ENCODE measurements at regions of chr6 and their contacts with region 1.

Region 1: DNA sequence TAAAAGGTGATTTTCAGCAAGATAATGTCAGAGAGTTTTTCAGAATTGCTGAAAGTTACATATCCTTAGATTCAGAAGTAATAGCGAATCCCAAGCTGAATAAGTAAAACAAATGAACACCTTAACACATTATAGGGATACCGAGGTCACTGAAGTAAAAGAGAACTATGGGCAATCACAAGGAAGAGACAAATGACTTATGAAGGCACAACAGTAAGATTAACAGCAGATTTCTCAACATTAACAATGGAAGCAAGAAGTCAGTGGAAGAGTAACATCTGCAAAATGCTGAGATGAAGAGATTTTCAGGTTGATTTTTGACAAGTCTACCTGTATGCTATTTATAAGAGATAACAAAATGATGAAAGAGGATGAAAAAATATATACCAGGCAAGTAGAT is 86.1 kb upstream of the EZR start:
- DNase-seq: no peak
- ATAC-seq: no peak
- H3K4me3 ChIP-seq: no peak overlapping the region
- H3K4me3 Mint-ChIP-seq: no peak overlapping the region
- H3K27ac ChIP-seq: no peak overlapping the region
- H3K27ac Mint-ChIP-seq: no peak overlapping the region
- H3K4me1 ChIP-seq: peaks cover 7% of the 10 kb centered on the region
- H3K4me1 Mint-ChIP-seq: peaks cover 6 to 7% of the 10 kb centered on the region in 2 donors
- H3K27me3 ChIP-seq: no peaks in the 10 kb centered on the region
- H3K27me3 Mint-ChIP-seq: peaks cover 0 to 3% of the 10 kb centered on the region in 2 donors
- CTCF ChIP-seq: no peak

Region 2: GRCh38 chr6:158803733-158804143 is 101.5 kb before region 1 on chr6:
- intact Hi-C with region 1: loop called (anchors 2 kb)
- DNase-seq: peak; percentile 44 to 76
- ATAC-seq: peak; percentile 65 to 80 (median 76)
- H3K4me3 ChIP-seq: peak overlapping the region; percentile 25
- H3K4me3 Mint-ChIP-seq: peak overlapping the region; percentile 72
- H3K27ac ChIP-seq: peak overlapping the region; percentile 74
- H3K27ac Mint-ChIP-seq: peak overlapping the region; percentile 88 to 91
- H3K4me1 ChIP-seq: peaks cover 56% of the 10 kb centered on the region
- H3K4me1 Mint-ChIP-seq: peaks cover 76% of the 10 kb centered on the region in 2 donors
- H3K27me3 ChIP-seq: no peaks in the 10 kb centered on the region
- H3K27me3 Mint-ChIP-seq: no peaks in the 10 kb centered on the region
- CTCF ChIP-seq: no peak

Region 3: GRCh38 chr6:158894193-158894592 is 11.1 kb before region 1 on chr6:
- intact Hi-C with region 1: no loop called
- DNase-seq: no peak
- ATAC-seq: no peak
- H3K4me3 ChIP-seq: no peak overlapping the region
- H3K4me3 Mint-ChIP-seq: no peak overlapping the region
- H3K27ac ChIP-seq: no peak overlapping the region
- H3K27ac Mint-ChIP-seq: no peak overlapping the region
- H3K4me1 ChIP-seq: peaks cover 2% of the 10 kb centered on the region
- H3K4me1 Mint-ChIP-seq: no peaks in the 10 kb centered on the region
- H3K27me3 ChIP-seq: no peaks in the 10 kb centered on the region
- H3K27me3 Mint-ChIP-seq: peaks cover 0 to 3% of the 10 kb centered on the region in 2 donors
- CTCF ChIP-seq: no peak

Region 4: DNA sequence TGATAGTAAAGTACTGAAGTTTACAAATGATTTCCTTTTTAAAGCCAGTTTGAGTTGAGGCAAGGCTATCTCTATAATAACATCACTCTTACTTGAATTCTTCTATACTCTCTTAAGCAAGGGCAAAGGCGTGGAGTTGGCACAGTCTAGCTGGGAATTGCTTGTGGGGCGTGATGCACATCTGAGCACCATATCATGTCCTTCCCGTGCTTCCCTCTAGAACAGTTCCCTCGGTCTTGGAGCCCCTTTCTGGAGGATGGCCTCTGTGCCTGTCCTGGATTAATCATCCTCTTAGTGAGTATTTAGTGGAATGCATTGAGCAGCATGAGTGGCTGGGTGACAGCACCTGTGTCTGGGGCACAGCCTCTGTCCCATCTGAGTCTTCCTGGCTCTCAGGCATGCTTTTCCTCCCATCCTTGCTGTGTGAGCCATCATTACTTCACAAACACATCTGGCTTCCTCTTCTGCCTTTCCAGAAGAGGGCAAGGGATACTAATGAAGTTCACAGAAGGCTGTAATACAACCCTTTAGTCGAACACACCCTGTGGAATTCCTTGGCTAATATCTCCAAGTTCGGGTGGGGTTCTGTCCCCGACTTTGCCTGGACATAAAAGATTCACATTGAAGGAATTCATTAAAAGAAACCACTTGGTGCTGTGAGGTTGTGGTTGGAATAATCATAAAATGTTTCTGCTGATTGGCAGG is 452.1 kb after region 1 on chr6:
- intact Hi-C with region 1: no loop called
- DNase-seq: no peak
- ATAC-seq: no peak
- H3K4me3 ChIP-seq: no peak overlapping the region
- H3K4me3 Mint-ChIP-seq: no peak overlapping the region
- H3K27ac ChIP-seq: no peak overlapping the region
- H3K27ac Mint-ChIP-seq: no peak overlapping the region
- H3K4me1 ChIP-seq: no peaks in the 10 kb centered on the region
- H3K4me1 Mint-ChIP-seq: no peaks in the 10 kb centered on the region
- H3K27me3 ChIP-seq: no peaks in the 10 kb centered on the region
- H3K27me3 Mint-ChIP-seq: peaks cover 9 to 43% of the 10 kb centered on the region in 2 donors
- CTCF ChIP-seq: no peak

Measured in natural killer cell (primary cell).